ENCODE measurements at regions of chr11 and their contacts with region 1.

Region 1: GRCh38 chr11:61509043-61510029 is 787 bp downstream of the LRRC10B start:
- DNase-seq: peak; percentile 91
- H3K4me3 Mint-ChIP-seq: peak overlapping the region; percentile 40
- H3K27ac Mint-ChIP-seq: no peak overlapping the region
- H3K4me1 Mint-ChIP-seq: peaks cover 5% of the 10 kb centered on the region
- H3K27me3 Mint-ChIP-seq: peaks cover 42% of the 10 kb centered on the region

Region 2: GRCh38 chr11:61445516-61445915 is 63.8 kb before region 1 on chr11:
- intact Hi-C with region 1: no loop called
- DNase-seq: no peak
- H3K4me3 Mint-ChIP-seq: no peak overlapping the region
- H3K27ac Mint-ChIP-seq: peak overlapping the region; percentile 37
- H3K4me1 Mint-ChIP-seq: peaks cover 21% of the 10 kb centered on the region
- H3K27me3 Mint-ChIP-seq: no peaks in the 10 kb centered on the region

Region 3: DNA sequence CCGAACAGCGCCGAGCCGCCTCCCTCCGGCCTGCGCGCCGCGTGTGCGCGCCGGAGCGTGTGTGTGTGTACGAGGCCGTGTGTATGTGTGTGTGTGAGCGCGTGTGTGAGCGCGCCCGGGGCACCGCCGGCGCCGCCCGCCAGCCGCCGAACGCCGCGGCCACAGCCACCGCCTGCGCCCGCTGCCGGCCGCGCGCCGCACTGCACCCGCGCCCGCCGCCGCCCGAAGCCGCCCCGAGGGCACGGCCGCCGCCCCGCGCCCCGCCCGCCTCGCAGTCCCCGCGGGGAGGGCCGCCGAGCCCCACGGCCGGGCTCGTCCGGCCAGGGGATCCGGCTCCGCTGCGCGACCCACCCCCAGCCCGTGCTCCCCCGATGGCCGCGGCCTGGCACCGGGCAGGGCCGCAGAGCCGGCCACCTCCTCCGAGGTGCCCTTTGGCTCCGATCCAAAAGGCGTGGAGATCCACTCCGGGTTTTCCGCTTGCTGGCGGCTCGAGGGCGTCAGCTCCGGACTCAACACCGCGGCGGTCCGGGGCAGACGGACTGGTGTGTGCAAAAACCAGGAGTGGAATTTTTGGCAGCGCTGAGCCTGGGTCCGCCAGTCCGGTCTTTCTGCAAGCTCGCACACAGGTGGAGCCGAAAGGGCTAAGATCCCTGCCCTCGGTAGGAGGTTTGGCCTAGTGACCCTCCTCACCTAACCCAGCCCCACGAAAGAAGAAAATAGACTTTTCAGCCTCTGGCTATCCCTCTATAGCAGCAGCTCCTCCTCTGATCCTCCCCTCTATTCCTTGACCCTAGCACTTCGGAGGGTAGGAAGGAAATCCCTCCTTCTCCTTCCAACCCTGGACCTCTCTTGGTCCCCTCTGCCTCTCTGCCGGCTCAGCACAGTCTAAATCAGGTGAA is 71.9 kb after region 1 on chr11 and contains the start of gene SYT7:
- intact Hi-C with region 1: loop called (anchors 2 kb)
- DNase-seq: peak; percentile 98
- H3K4me3 Mint-ChIP-seq: peak within 1 kb of the TSS; percentile 78
- H3K27ac Mint-ChIP-seq: peak within 1 kb of the TSS; percentile 70
- H3K4me1 Mint-ChIP-seq: peaks cover 8% of the 10 kb centered on the region
- H3K27me3 Mint-ChIP-seq: peaks cover 60% of the 10 kb centered on the region
- total RNA-seq, gene SYT7: 0.23 and 0.43 TPM in 2 replicates

Measured in activated CD4-positive, alpha-beta T cell treated with anti-CD3 and anti-CD28 coated beads, Interleukin-2, amount 10 ng/mL, durations not matched to agents 24 days and 14 days (primary cell).